BJ (cell line): ENCODE measurements at regions of chr17 and their contacts with region 1.

Region 1: DNA sequence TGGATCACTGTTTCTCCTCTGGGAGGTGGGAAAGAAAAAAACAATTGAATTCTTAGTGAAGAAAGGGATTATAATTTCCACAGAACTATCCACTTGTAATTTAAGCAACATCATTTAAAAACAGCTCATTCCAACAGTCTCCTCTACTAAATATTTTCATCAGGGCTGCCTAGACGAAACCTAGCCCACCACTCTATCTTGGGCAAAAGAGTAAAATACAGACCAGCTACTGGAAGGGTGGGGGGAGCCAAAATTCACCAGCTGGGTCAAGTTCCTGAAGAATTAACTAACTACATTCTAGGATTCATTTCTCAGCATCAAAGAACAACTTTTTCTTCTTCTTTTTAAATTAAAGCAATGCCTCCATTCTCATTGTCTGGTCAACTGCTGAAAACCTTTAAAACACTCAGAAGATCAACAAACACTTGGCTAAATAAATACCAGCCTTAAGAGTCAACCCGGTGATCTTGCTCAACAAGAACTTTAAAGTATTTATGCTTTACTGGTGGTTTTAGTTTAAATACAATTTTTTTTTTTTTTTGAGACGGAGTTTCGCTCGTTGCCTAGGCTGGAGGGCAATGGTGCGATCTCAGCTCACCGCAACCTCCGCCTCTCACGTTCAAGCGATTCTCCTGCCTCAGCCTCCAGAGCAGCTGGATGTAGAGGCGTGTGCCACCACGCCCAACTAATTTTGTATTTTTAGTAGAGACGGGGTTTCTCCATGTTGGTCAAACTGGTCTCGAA is 25.2 kb downstream of the KANSL1 start:
- DNase-seq: peak; percentile 92
- H3K4me3 ChIP-seq: no peak overlapping the region
- H3K27me3 ChIP-seq: no peaks in the 10 kb centered on the region
- CTCF ChIP-seq: no peak

Region 2: GRCh38 chr17:46003907-46004748 is 163.9 kb before region 1 on chr17:
- CTCF ChIA-PET with region 1: no interaction called
- POLR2A ChIA-PET with region 1: no interaction called
- DNase-seq: no peak
- H3K4me3 ChIP-seq: no peak overlapping the region
- H3K27me3 ChIP-seq: no peaks in the 10 kb centered on the region
- CTCF ChIP-seq: no peak

Region 3: GRCh38 chr17:46072998-46073397 is 95.0 kb before region 1 on chr17:
- CTCF ChIA-PET with region 1: no interaction called
- POLR2A ChIA-PET with region 1: interaction called, 19 read pairs
- DNase-seq: peak; percentile 49
- H3K4me3 ChIP-seq: no peak overlapping the region
- H3K27me3 ChIP-seq: no peaks in the 10 kb centered on the region
- CTCF ChIP-seq: no peak

Region 4: DNA sequence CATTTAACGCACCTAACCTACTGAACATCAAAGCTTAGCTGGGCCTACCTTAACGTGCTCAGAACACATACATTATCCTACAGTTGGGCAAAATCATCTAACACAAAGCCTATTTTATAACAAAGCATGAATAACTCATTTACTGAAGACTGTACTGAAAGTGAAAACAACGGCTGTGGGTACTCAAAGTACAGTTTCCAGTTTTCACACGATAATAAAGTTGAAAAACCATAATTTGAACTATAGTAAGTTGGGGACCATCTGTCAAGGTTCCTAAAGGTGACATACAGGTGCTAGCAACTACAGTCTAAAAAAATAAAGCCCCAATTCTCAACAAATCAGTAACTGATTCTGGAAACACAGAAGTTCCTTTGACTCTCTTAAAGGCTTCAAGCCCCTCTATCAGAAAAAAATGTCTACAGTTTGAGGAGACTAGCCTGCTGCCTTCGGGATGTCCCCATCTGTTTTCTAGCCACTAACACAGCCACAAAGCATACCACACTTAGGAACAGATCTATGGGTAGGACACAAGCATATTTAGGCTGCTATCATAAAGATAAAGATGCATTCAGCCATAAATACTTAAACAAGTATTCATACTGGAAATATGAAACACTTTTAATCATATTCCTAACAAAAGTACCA is 46.0 kb before region 1 on chr17:
- CTCF ChIA-PET with region 1: no interaction called
- POLR2A ChIA-PET with region 1: no interaction called
- DNase-seq: no peak
- H3K4me3 ChIP-seq: no peak overlapping the region
- H3K27me3 ChIP-seq: no peaks in the 10 kb centered on the region
- CTCF ChIP-seq: no peak

Region 5: GRCh38 chr17:46135126-46135812 is 32.7 kb before region 1 on chr17:
- CTCF ChIA-PET with region 1: interaction called, 3 read pairs
- POLR2A ChIA-PET with region 1: interaction called, 10 read pairs
- DNase-seq: no peak
- H3K4me3 ChIP-seq: no peak overlapping the region
- H3K27me3 ChIP-seq: no peaks in the 10 kb centered on the region
- CTCF ChIP-seq: no peak

Region 6: GRCh38 chr17:46179375-46179999 is 11.5 kb after region 1 on chr17:
- CTCF ChIA-PET with region 1: interaction called, 7 read pairs
- POLR2A ChIA-PET with region 1: interaction called, 12 read pairs
- DNase-seq: no peak
- H3K4me3 ChIP-seq: no peak overlapping the region
- H3K27me3 ChIP-seq: no peaks in the 10 kb centered on the region
- CTCF ChIP-seq: no peak